ENCODE measurements at regions of chr16 and their contacts with region 1.

Region 1: GRCh38 chr16:4500272-4500671 is 24.1 kb downstream of the HMOX2 start:
- DNase-seq: no peak
- H3K4me3 ChIP-seq: no peak overlapping the region
- H3K4me3 Mint-ChIP-seq: peak overlapping the region in 1 of 8 donors; percentile 1
- H3K27ac ChIP-seq: no peak overlapping the region
- H3K27ac Mint-ChIP-seq: peak overlapping the region in 6 of 7 donors; percentile 82 to 97 (median 92)
- H3K4me1 ChIP-seq: peaks cover 88% of the 10 kb centered on the region
- H3K4me1 Mint-ChIP-seq: peaks cover 61 to 94% (median 82%) of the 10 kb centered on the region in 4 donors
- H3K27me3 ChIP-seq: no peaks in the 10 kb centered on the region
- H3K27me3 Mint-ChIP-seq: no peaks in the 10 kb centered on the region

Region 2: GRCh38 chr16:4123616-4124265 is 376.5 kb before region 1 on chr16:
- CTCF ChIA-PET with region 1: no interaction called
- POLR2A ChIA-PET with region 1: no interaction called
- intact Hi-C with region 1: no loop called
- DNase-seq: no peak
- H3K4me3 ChIP-seq: no peak overlapping the region
- H3K4me3 Mint-ChIP-seq: no peak overlapping the region
- H3K27ac ChIP-seq: no peak overlapping the region
- H3K27ac Mint-ChIP-seq: no peak overlapping the region
- H3K4me1 ChIP-seq: no peaks in the 10 kb centered on the region
- H3K4me1 Mint-ChIP-seq: no peaks in the 10 kb centered on the region
- H3K27me3 ChIP-seq: no peaks in the 10 kb centered on the region
- H3K27me3 Mint-ChIP-seq: peaks cover 3 to 7% of the 10 kb centered on the region in 2 donors

Region 3: GRCh38 chr16:4370570-4371356 is 129.5 kb before region 1 on chr16:
- CTCF ChIA-PET with region 1: no interaction called
- POLR2A ChIA-PET with region 1: no interaction called
- intact Hi-C with region 1: no loop called
- DNase-seq: no peak
- H3K4me3 ChIP-seq: no peak overlapping the region
- H3K4me3 Mint-ChIP-seq: no peak overlapping the region
- H3K27ac ChIP-seq: peak overlapping the region; percentile 19
- H3K27ac Mint-ChIP-seq: peak overlapping the region in 6 of 7 donors; percentile 25 to 85 (median 57)
- H3K4me1 ChIP-seq: peaks cover 40% of the 10 kb centered on the region
- H3K4me1 Mint-ChIP-seq: peaks cover 11 to 52% (median 26%) of the 10 kb centered on the region in 4 donors
- H3K27me3 ChIP-seq: no peaks in the 10 kb centered on the region
- H3K27me3 Mint-ChIP-seq: no peaks in the 10 kb centered on the region

Region 4: GRCh38 chr16:4487955-4488498 is 12.2 kb before region 1 on chr16:
- CTCF ChIA-PET with region 1: interaction called, 343 read pairs
- POLR2A ChIA-PET with region 1: interaction called, 150 read pairs
- intact Hi-C with region 1: loop called (anchors 1 kb)
- DNase-seq: peak in 3 of 5 donors; percentile 40 to 54 (median 42)
- H3K4me3 ChIP-seq: peak overlapping the region in 1 of 2 donors; percentile 33
- H3K4me3 Mint-ChIP-seq: peak overlapping the region; percentile 56 to 91 (median 81)
- H3K27ac ChIP-seq: peak overlapping the region; percentile 50
- H3K27ac Mint-ChIP-seq: peak overlapping the region; percentile 81 to 98 (median 97)
- H3K4me1 ChIP-seq: peaks cover 84% of the 10 kb centered on the region
- H3K4me1 Mint-ChIP-seq: peaks cover 36 to 70% (median 57%) of the 10 kb centered on the region in 4 donors
- H3K27me3 ChIP-seq: no peaks in the 10 kb centered on the region
- H3K27me3 Mint-ChIP-seq: no peaks in the 10 kb centered on the region

Region 5: DNA sequence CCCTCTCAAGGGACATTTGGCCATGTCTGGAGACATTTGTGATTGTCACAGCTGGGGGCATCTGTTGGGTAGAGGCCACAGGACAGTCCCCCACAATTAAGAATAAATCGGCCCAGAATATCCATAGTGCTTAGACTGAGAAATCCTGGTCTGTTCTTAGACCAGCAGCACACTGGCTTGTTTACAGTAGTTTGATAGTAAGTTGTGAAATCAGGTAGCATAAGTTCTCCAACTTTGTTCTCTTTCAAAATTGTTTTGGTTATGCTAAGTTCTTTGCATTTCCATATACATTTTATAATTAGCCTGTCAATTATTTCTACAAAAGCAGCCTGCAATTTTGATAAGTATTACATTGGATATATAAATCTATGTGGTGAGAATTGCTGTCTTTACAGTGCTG is 131.2 kb after region 1 on chr16:
- CTCF ChIA-PET with region 1: no interaction called
- POLR2A ChIA-PET with region 1: no interaction called
- intact Hi-C with region 1: no loop called
- DNase-seq: no peak
- H3K4me3 ChIP-seq: no peak overlapping the region
- H3K4me3 Mint-ChIP-seq: no peak overlapping the region
- H3K27ac ChIP-seq: no peak overlapping the region
- H3K27ac Mint-ChIP-seq: no peak overlapping the region
- H3K4me1 ChIP-seq: peaks cover 7% of the 10 kb centered on the region
- H3K4me1 Mint-ChIP-seq: peaks cover 14 to 28% (median 21%) of the 10 kb centered on the region in 4 donors
- H3K27me3 ChIP-seq: no peaks in the 10 kb centered on the region
- H3K27me3 Mint-ChIP-seq: no peaks in the 10 kb centered on the region

Measured in CD4-positive, alpha-beta memory T cell (primary cell).